Endothelial cell of umbilical vein (primary cell): ENCODE measurements at regions of chr3 and their contacts with region 1.

Region 1: GRCh38 chr3:77906102-77906709 is 866.3 kb downstream of the ROBO2 start:
- DNase-seq: peak; percentile 49
- H3K4me3 ChIP-seq: no peak overlapping the region
- H3K27ac ChIP-seq: peak overlapping the region; percentile 50
- H3K4me1 ChIP-seq: peaks cover 4% of the 10 kb centered on the region
- H3K27me3 ChIP-seq: no peaks in the 10 kb centered on the region
- CTCF ChIP-seq: no peak
- POLR2A ChIP-seq: no peak

Region 2: GRCh38 chr3:77667901-77668300 is 238.3 kb before region 1 on chr3:
- CTCF ChIA-PET with region 1: no interaction called
- POLR2A ChIA-PET with region 1: no interaction called
- dilution Hi-C with region 1: no loop called
- intact Hi-C with region 1: loop called (anchors 10 kb)
- DNase-seq: peak; percentile 35
- H3K4me3 ChIP-seq: no peak overlapping the region
- H3K27ac ChIP-seq: peak overlapping the region; percentile 39
- H3K4me1 ChIP-seq: peaks cover 14% of the 10 kb centered on the region
- H3K27me3 ChIP-seq: no peaks in the 10 kb centered on the region
- CTCF ChIP-seq: no peak
- POLR2A ChIP-seq: no peak

Region 3: DNA sequence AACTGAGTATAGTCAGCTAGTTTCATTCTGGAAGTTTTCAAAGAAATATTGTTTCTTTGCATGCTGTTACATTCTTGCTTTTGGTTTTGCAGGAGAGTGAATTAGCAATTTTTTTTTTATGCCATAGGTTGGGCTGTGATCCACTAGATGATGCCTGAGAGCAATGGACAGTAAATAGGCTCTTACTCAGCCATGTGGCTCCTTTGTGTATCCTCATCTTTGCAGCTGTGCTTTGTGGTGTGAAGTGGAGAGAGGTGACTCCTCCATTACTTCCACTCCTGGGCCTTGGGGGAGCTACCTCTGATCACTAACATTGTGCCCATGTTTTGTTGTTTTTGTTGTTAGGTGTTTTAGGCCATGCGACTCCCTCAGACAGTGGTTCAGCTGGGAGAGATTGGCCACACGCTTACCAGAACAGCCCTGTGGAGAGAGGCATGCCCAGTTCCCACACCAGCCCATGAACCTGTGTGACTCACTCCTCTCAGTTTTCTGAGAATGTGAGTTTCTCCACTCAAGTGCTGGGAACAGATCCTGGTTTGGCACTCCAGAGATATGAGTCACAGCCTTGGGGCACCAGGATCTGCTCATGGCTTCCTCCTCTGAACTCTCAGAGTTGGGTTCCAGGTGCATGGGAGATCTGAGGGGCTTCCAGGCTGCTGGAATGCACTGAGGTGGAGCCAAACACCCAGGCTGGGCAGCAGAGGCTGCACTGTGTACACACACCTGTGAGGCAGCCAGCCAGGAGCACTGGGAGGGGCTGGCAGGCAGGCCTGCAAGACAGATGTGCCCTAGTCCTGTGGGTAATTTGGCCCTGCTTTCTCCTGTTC is 81.0 kb before region 1 on chr3:
- CTCF ChIA-PET with region 1: no interaction called
- POLR2A ChIA-PET with region 1: no interaction called
- dilution Hi-C with region 1: no loop called
- intact Hi-C with region 1: loop called (anchors 5 kb)
- DNase-seq: peak; percentile 54
- H3K4me3 ChIP-seq: no peak overlapping the region
- H3K27ac ChIP-seq: no peak overlapping the region
- H3K4me1 ChIP-seq: no peaks in the 10 kb centered on the region
- H3K27me3 ChIP-seq: no peaks in the 10 kb centered on the region
- CTCF ChIP-seq: no peak
- POLR2A ChIP-seq: no peak

Region 4: DNA sequence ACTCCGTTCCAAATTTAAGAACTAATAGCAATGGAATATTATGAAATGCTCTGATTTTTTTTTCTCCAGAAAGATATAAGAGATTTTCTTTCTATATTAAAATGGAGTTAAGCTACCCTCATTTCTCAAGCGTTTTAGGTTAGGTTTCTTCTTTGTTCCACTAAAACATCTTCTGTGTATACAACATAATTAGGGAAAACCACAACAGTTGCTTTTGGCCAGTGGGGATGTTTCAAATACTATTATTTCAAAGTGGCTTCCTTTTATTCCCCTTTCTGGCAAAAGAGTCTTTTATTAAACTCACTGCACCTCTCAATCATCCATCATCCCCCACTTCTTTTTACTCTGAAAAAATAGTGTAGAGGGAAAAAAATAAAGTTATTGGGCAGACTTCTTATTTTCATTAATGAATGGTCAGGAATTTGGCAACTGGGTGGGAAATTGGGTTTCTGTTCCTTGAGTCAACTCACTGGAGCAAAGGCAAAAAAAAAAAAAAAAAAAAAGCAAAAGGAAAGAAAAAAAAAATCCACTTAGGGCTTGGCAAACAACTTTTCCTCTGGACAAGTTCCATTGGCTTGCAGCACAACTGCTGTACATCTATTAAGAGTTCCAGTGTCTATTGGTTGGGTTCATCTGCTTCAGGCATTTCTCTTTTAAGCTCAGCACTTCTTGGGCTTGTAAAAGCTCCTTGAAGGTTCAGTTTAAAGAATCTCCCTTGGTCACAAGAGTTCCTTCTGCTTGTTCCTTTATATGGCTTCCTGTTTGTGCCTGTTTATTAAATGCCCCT is 898.2 kb after region 1 on chr3:
- CTCF ChIA-PET with region 1: no interaction called
- POLR2A ChIA-PET with region 1: no interaction called
- dilution Hi-C with region 1: no loop called
- intact Hi-C with region 1: no loop called
- DNase-seq: no peak
- H3K4me3 ChIP-seq: no peak overlapping the region
- H3K27ac ChIP-seq: no peak overlapping the region
- H3K4me1 ChIP-seq: no peaks in the 10 kb centered on the region
- H3K27me3 ChIP-seq: no peaks in the 10 kb centered on the region
- CTCF ChIP-seq: no peak
- POLR2A ChIP-seq: no peak